ENCODE measurements at regions of chr6 and their contacts with region 1.

Region 1: GRCh38 chr6:24991810-24992467 is 56.2 kb upstream of the RIPOR2 start:
- DNase-seq: no peak

Region 2: GRCh38 chr6:23403451-23403850 is 1588.5 kb before region 1 on chr6:
- intact Hi-C with region 1: loop called in 1 of 2 experiments (anchors 10 kb)
- DNase-seq: no peak

Region 3: GRCh38 chr6:24743944-24744335 is 248.0 kb before region 1 on chr6:
- intact Hi-C with region 1: no loop called
- DNase-seq: no peak

Region 4: DNA sequence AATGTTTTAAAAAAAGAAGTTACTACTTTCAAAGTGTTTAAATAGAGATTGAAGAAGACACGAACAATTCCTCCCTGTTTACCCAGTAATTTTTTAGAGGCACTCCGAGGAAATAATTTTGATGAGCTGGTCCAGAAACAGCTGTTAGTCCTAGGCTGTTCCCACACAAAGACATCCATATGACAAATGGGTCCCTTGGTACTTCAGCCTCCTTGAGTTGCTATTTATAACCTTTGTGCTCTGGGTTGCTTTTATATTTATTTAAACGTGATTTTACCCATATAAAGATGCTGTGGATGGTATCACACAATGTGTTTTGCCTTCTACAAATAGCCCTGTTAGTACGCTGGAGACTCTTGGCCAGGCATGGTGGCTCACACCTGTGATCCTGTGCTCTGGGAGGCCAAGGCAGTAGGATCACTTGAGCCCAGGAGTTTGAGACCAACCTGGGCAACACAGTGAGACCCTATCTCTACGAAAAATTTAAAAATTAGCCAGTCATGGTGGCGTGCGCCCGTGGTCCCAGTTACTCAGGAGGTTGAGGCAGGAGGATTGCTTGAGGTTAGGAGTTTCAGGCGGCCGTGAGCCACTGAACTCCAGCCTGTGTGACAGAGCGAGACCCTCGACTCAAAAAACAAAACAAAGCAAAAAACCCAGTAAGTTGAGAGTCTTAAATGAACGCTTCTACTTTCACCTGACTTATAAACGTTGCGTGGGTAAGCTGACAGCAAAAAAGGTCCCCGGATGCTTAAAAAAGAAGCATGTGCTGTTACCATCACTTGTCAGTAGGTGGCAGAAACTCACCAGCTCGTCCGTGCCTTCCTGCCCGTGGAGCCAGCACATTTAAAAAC is 136.3 kb before region 1 on chr6:
- intact Hi-C with region 1: loop called in 1 of 2 experiments (anchors 5 kb)
- DNase-seq: no peak

Region 5: GRCh38 chr6:25070547-25071366 is 78.8 kb after region 1 on chr6:
- intact Hi-C with region 1: loop called in 1 of 2 experiments (anchors 2 kb)
- DNase-seq: peak; percentile 87